Posterior vena cava (tissue), 2 donors: ENCODE measurements at regions of chr1 and their contacts with region 1.

Region 1: GRCh38 chr1:32266921-32267591 is 16.0 kb downstream of the LCK start:
- DNase-seq: no peak

Region 2: DNA sequence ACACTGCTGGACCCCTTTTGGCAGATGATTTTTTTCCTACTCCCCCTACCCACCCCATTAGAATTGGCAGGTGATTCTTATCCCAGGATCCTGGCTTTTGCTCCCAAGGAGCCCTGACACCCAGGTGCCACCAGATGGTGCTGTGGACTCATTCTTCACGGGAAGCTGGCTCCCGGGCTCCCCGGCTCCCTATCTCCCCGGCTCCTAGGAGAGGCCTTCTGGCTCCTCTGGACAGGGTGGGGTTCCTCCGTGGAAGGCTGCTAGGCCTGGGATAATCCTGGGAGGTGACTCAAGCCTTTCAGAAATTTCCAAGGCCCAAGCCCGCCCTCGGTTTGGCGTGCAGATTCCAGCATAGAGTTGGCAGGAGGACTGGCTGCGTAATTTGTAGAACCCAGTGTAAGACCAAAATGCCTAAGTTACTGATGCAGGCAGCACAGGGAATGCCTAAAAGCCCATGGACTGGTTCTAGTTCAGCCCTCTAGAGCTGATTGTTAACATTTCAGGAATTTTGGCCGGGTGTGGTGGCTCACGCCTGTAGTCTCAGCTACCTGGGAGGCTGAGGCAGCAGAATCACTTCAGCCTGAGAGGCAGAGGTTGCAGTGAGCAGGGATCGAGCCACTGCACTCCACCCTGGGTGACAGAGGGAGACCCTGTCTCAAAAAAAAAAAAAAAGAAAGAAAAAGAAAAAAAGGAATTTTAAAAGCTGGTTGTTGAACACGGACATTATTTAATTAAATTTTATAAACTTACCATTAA is 134.0 kb after region 1 on chr1:
- intact Hi-C with region 1: no loop called
- DNase-seq: peak; percentile 96

Region 3: GRCh38 chr1:32612189-32612881 is 345.3 kb after region 1 on chr1:
- intact Hi-C with region 1: loop called in 1 of 2 experiments (anchors 5 kb)
- DNase-seq: peak; percentile 94